ENCODE measurements at regions of chr18 and their contacts with region 1.

Region 1: DNA sequence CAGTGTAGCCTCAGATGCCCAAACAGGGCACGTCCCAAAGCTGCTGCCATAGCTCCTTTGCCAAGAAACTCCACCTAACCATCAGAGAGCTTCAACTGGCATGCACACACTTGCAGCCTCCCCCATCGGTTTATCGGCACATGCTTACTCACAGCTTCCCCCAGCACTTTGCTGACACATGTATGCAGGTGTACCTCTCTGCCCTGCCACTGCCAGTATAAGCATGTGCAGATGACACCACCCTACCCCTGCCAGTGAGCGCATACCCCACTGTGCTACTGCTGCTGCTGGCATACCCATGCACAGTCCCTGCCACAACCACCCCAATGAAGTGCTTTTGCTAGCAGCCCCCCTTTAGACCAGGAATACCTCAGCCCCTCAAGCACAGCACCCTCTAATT is 1231.0 kb downstream of the DSC3 start:
- DNase-seq: no peak
- H3K4me3 ChIP-seq: no peak overlapping the region
- H3K27ac ChIP-seq: no peak overlapping the region
- H3K4me1 ChIP-seq: no peaks in the 10 kb centered on the region
- H3K27me3 ChIP-seq: no peaks in the 10 kb centered on the region
- CTCF ChIP-seq: no peak
- POLR2A ChIP-seq: no peak

Region 2: DNA sequence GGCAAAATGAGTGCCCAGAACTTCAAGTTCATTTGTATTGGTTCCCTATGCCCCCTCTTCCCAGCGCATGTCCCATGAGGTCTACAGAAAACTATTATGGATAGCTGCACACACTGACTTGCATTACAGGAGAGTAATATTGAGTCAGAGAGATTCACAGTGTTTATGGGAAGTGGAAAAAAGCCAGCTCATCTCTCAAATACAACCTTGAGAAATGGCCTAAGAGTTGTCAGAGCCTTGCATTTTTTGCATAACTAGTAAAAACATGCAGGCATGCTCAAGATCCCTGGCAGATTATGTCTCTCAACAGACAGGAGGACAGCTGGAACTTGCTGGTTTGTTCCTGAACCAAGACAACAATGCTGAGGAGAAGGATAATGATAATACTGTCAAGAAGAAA is 61.8 kb before region 1 on chr18:
- intact Hi-C with region 1: loop called (anchors 10 kb)
- DNase-seq: no peak
- H3K4me3 ChIP-seq: no peak overlapping the region
- H3K27ac ChIP-seq: no peak overlapping the region
- H3K4me1 ChIP-seq: no peaks in the 10 kb centered on the region
- H3K27me3 ChIP-seq: no peaks in the 10 kb centered on the region
- CTCF ChIP-seq: no peak
- POLR2A ChIP-seq: no peak

Measured in uterus (tissue), 4 donors.